ENCODE measurements at regions of chr4 and their contacts with region 1.

Region 1: DNA sequence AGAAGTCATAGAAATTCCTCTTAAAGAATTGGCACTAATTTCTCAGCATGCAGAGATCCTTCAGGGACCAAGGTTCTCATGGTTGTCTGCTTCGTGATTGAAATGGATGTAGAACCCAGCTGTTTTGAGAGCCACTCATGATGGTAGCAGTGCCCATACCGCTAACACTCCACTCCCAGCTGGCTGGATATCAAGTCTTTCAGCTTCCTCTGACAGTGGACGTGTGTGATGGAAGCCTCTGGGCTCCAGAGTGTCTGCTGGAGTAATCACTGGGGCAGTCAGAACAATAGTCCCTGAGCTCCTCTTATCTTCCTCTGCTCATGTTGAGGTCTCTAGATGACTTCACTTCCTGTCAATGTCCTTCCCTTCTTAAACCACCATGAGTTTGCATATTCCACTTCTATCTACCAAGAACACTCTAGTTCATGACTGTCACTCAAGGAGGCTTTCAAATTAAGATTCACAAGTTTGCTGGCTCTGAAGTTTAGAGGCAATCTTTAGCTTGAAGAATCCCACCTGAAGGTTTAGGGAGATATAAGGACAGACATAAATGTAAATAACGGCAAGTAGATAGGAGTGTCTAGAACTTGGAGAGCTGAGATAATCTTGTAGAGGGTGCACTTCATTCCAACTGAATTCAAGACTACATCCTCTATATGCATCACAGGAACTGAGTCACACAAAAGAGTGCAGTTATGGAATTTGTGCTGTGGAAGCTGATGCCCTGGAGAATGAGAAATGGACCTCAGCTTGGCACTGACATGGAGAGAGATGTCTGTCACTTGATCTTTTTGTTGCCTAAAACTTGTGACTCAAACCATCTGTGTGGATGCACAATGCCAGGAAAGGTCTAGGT is 64.6 kb upstream of the WDR1 start:
- DNase-seq: no peak
- H3K4me3 ChIP-seq: no peak overlapping the region
- H3K27ac ChIP-seq: peak overlapping the region; percentile 38
- H3K4me1 ChIP-seq: peaks cover 17% of the 10 kb centered on the region
- H3K27me3 ChIP-seq: no peaks in the 10 kb centered on the region
- CTCF ChIP-seq: no peak

Region 2: GRCh38 chr4:10403633-10404445 is 222.7 kb after region 1 on chr4:
- dilution Hi-C with region 1: loop called (anchors 25 kb)
- DNase-seq: no peak
- H3K4me3 ChIP-seq: no peak overlapping the region
- H3K27ac ChIP-seq: no peak overlapping the region
- H3K4me1 ChIP-seq: no peaks in the 10 kb centered on the region
- H3K27me3 ChIP-seq: no peaks in the 10 kb centered on the region
- CTCF ChIP-seq: peak in 2 of 3 experiments; percentile 26 to 53

Measured in keratinocyte (primary cell).